ENCODE measurements at regions of chr13 and their contacts with region 1.

Region 1: DNA sequence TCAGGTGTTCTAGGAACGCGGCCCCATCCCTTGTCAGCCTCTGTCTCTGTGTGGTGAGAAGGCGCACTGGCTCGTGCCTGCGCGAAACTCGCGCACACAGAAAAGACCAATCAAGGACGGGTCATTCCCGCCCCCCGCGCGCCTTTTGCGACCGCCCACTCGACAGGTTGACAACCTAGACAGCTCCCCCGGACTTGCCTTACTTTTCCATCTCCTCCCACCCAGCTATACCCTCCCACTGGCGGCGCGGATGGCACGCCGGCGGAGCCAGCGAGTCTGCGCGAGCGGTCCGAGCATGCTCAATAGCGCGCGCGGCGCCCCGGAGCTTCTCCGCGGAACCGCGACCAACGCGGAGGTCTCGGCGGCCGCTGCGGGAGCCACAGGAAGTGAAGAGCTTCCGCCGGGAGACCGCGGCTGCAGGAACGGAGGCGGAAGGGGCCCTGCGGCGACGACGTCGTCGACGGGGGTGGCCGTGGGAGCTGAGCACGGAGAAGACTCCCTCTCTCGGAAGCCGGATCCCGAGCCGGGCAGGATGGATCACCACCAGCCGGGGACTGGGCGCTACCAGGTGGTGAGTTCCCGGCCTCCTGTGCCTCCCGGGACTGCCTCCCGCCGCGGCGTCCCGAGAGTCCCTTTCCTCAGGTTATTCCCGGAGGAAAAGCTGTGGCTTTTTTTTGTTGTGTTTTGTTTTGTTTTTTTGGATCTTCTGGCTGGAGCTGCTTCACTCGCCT is at the start of gene NDFIP2:
- DNase-seq: peak; percentile 89
- H3K4me3 Mint-ChIP-seq: peak within 1 kb of the TSS; percentile 90
- H3K27ac Mint-ChIP-seq: peak within 1 kb of the TSS; percentile 83
- H3K4me1 Mint-ChIP-seq: peaks cover 44% of the 10 kb centered on the region
- H3K27me3 Mint-ChIP-seq: peaks cover 23% of the 10 kb centered on the region
- total RNA-seq, gene NDFIP2: 49.6 to 53.2 TPM

Region 2: DNA sequence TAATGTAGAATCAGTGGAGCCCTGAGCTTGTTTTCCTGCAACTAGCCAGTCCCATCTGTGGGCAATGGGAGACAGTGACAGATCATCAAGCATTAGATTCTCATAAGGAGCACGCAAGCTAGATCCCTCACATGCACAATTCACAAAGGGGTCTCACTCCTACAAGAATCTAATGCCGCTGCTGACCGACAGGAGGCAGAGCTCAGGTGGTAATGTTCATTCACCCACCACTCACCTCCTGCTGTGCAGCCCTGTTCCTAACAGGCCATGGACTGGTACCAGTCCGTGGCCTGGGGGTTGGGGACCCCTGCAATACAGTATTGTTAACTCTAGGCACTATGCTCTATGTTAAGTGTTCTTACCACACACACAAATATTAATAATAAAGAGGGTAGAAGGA is 437.9 kb before region 1 on chr13:
- CTCF ChIA-PET with region 1: no interaction called
- POLR2A ChIA-PET with region 1: no interaction called
- DNase-seq: no peak
- H3K4me3 Mint-ChIP-seq: no peak overlapping the region
- H3K27ac Mint-ChIP-seq: no peak overlapping the region
- H3K4me1 Mint-ChIP-seq: no peaks in the 10 kb centered on the region
- H3K27me3 Mint-ChIP-seq: peaks cover 8% of the 10 kb centered on the region

Region 3: DNA sequence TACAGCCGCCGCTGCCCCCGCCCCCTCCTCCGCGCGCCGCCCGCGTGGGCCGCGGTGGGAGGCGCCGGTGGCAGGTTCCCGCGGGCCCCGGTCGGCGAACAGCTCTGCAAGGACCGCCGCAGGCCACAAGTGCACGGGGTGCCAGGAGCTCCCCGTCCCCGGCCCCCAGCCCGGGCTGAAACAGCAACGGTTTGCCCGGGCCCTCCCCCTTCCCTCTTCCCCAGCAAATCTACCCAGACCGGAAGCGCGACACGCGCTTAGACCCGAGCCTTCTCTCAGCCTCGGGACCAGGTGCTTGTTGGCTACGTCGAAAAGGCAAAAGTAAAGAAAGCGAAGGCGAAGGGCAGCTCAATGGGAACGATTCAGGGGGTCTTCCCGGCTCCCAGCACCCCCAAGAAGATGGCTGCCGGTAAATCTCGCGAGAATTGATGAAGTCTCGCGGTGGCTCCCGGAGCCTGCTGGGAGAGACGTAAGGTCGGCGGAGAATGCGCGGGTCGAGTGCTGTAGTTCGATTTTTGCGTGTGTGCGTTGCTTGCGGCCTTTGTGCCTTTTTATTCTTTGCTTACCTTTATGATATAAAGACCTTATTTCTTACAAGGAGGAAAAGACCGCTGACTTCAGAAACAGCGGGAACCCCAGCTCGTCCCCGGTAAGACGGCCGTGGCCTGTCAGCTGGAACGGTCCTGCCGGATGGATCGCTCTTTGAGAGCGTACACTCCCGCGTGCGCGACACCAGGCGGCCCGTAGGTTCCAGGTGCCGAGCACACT is 75.1 kb before region 1 on chr13 and contains the start of gene RBM26:
- CTCF ChIA-PET with region 1: interaction called, 6 read pairs
- POLR2A ChIA-PET with region 1: interaction called, 25 read pairs
- DNase-seq: peak; percentile 94
- H3K4me3 Mint-ChIP-seq: peak within 1 kb of the TSS; percentile 89
- H3K27ac Mint-ChIP-seq: peak within 1 kb of the TSS; percentile 93
- H3K4me1 Mint-ChIP-seq: peaks cover 13% of the 10 kb centered on the region
- H3K27me3 Mint-ChIP-seq: no peaks in the 10 kb centered on the region
- total RNA-seq, gene RBM26: 51.1 to 52.0 TPM

Region 4: GRCh38 chr13:79451500-79451962 is 29.6 kb before region 1 on chr13:
- CTCF ChIA-PET with region 1: interaction called, 14 read pairs
- POLR2A ChIA-PET with region 1: interaction called, 27 read pairs
- DNase-seq: peak; percentile 93
- H3K4me3 Mint-ChIP-seq: peak overlapping the region; percentile 66
- H3K27ac Mint-ChIP-seq: peak overlapping the region; percentile 89
- H3K4me1 Mint-ChIP-seq: peaks cover 76% of the 10 kb centered on the region
- H3K27me3 Mint-ChIP-seq: no peaks in the 10 kb centered on the region

Region 5: GRCh38 chr13:79457948-79458347 is 23.2 kb before region 1 on chr13:
- CTCF ChIA-PET with region 1: interaction called, 4 read pairs
- POLR2A ChIA-PET with region 1: interaction called, 12 read pairs
- DNase-seq: peak; percentile 31
- H3K4me3 Mint-ChIP-seq: no peak overlapping the region
- H3K27ac Mint-ChIP-seq: no peak overlapping the region
- H3K4me1 Mint-ChIP-seq: peaks cover 47% of the 10 kb centered on the region
- H3K27me3 Mint-ChIP-seq: no peaks in the 10 kb centered on the region

Region 6: GRCh38 chr13:79491715-79492114 is 10.6 kb after region 1 on chr13:
- CTCF ChIA-PET with region 1: interaction called, 11 read pairs
- POLR2A ChIA-PET with region 1: interaction called, 11 read pairs
- DNase-seq: no peak
- H3K4me3 Mint-ChIP-seq: peak overlapping the region; percentile 21
- H3K27ac Mint-ChIP-seq: peak overlapping the region; percentile 75
- H3K4me1 Mint-ChIP-seq: peaks cover 81% of the 10 kb centered on the region
- H3K27me3 Mint-ChIP-seq: no peaks in the 10 kb centered on the region

Region 7: GRCh38 chr13:79522583-79522982 is 41.5 kb after region 1 on chr13:
- CTCF ChIA-PET with region 1: interaction called, 8 read pairs
- POLR2A ChIA-PET with region 1: interaction called, 21 read pairs
- DNase-seq: peak; percentile 66
- H3K4me3 Mint-ChIP-seq: peak overlapping the region; percentile 53
- H3K27ac Mint-ChIP-seq: peak overlapping the region; percentile 85
- H3K4me1 Mint-ChIP-seq: peaks cover 29% of the 10 kb centered on the region
- H3K27me3 Mint-ChIP-seq: no peaks in the 10 kb centered on the region

Region 8: DNA sequence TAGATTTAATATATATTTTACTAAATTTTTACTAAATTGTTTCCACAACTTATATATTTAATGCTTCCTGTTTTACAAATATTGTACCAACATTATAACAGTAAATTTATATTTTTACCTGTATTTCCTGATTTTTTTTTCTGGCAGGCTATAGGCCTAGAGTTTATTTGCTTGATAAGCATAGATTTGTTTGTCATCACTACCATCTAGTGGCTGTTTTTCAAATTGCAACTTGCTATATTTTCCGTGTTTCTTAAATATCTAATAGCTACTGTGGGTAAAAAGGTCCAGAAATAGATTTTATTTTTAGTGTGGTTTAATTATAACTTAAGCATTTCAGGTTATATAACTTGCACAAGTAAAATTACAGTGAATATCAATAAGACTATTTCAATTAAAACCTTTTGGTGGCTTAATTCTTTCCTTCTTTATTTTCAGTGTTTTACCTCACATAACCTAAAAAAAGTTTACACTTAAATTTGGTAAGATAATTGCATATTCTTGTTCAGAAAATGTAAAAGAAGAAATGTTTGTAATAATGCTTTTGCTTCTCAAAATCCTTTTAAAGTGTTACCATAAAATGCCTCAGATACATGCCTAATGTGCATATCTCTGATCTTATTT is 60.4 kb after region 1 on chr13:
- CTCF ChIA-PET with region 1: interaction called, 10 read pairs
- POLR2A ChIA-PET with region 1: no interaction called
- DNase-seq: no peak
- H3K4me3 Mint-ChIP-seq: no peak overlapping the region
- H3K27ac Mint-ChIP-seq: no peak overlapping the region
- H3K4me1 Mint-ChIP-seq: peaks cover 3% of the 10 kb centered on the region
- H3K27me3 Mint-ChIP-seq: no peaks in the 10 kb centered on the region

Measured in activated CD4-positive, alpha-beta memory T cell treated with anti-CD3 and anti-CD28 coated beads, Interleukin-2, amount 10 ng/mL, durations not matched to agents 7 days and 5 days (primary cell).